Activated naive CD4-positive, alpha-beta T cell treated with anti-CD3 and anti-CD28 coated beads for 36 hours (primary cell): ENCODE measurements at regions of chr3 and their contacts with region 1.

Region 1: GRCh38 chr3:169668957-169669681 is 5.6 kb upstream of the MECOM start:
- DNase-seq: peak; percentile 71
- H3K4me3 Mint-ChIP-seq: peak overlapping the region; percentile 57
- H3K27ac Mint-ChIP-seq: no peak overlapping the region
- H3K4me1 Mint-ChIP-seq: peaks cover 11% of the 10 kb centered on the region
- H3K27me3 Mint-ChIP-seq: peaks cover 82% of the 10 kb centered on the region

Region 2: DNA sequence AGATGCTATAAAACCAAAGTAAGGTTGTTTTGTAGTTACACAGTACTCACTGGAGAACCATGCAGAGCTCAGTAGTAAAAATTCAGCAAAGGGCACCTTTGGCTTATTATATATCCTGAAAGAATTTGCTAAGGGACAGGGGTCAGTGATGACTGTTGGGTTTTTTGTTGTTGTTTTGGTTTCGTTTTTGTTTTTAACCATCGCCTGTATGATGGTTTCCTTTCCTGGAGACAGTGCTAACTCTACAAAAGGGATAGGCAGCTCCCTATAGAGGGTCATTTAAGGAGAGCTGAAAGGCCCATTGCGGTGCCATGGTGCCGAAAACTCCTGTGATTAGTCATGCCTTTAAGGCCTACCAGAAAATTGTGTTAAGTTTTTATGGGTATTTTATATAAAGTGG is 1455.2 kb before region 1 on chr3:
- CTCF ChIA-PET with region 1: no interaction called
- intact Hi-C with region 1: loop called (anchors 5 kb)
- DNase-seq: no peak
- H3K4me3 Mint-ChIP-seq: no peak overlapping the region
- H3K27ac Mint-ChIP-seq: no peak overlapping the region
- H3K4me1 Mint-ChIP-seq: no peaks in the 10 kb centered on the region
- H3K27me3 Mint-ChIP-seq: peaks cover 2% of the 10 kb centered on the region

Region 3: GRCh38 chr3:168952551-168952950 is 716.6 kb before region 1 on chr3:
- CTCF ChIA-PET with region 1: no interaction called
- intact Hi-C with region 1: loop called (anchors 10 kb)
- DNase-seq: no peak
- H3K4me3 Mint-ChIP-seq: no peak overlapping the region
- H3K27ac Mint-ChIP-seq: no peak overlapping the region
- H3K4me1 Mint-ChIP-seq: no peaks in the 10 kb centered on the region
- H3K27me3 Mint-ChIP-seq: no peaks in the 10 kb centered on the region

Region 4: GRCh38 chr3:169295126-169295525 is 374.0 kb before region 1 on chr3:
- CTCF ChIA-PET with region 1: interaction called, 3 read pairs
- intact Hi-C with region 1: loop called (anchors 1 kb)
- DNase-seq: peak; percentile 8
- H3K4me3 Mint-ChIP-seq: no peak overlapping the region
- H3K27ac Mint-ChIP-seq: no peak overlapping the region
- H3K4me1 Mint-ChIP-seq: no peaks in the 10 kb centered on the region
- H3K27me3 Mint-ChIP-seq: peaks cover 7% of the 10 kb centered on the region

Region 5: GRCh38 chr3:170007031-170007663 is 338.0 kb after region 1 on chr3:
- CTCF ChIA-PET with region 1: no interaction called
- intact Hi-C with region 1: loop called (anchors 10 kb)
- DNase-seq: peak; percentile 71
- H3K4me3 Mint-ChIP-seq: peak overlapping the region; percentile 56
- H3K27ac Mint-ChIP-seq: peak overlapping the region; percentile 83
- H3K4me1 Mint-ChIP-seq: peaks cover 44% of the 10 kb centered on the region
- H3K27me3 Mint-ChIP-seq: no peaks in the 10 kb centered on the region